Endothelial cell of umbilical vein (primary cell): ENCODE measurements at regions of chr12 and their contacts with region 1.

Region 1: DNA sequence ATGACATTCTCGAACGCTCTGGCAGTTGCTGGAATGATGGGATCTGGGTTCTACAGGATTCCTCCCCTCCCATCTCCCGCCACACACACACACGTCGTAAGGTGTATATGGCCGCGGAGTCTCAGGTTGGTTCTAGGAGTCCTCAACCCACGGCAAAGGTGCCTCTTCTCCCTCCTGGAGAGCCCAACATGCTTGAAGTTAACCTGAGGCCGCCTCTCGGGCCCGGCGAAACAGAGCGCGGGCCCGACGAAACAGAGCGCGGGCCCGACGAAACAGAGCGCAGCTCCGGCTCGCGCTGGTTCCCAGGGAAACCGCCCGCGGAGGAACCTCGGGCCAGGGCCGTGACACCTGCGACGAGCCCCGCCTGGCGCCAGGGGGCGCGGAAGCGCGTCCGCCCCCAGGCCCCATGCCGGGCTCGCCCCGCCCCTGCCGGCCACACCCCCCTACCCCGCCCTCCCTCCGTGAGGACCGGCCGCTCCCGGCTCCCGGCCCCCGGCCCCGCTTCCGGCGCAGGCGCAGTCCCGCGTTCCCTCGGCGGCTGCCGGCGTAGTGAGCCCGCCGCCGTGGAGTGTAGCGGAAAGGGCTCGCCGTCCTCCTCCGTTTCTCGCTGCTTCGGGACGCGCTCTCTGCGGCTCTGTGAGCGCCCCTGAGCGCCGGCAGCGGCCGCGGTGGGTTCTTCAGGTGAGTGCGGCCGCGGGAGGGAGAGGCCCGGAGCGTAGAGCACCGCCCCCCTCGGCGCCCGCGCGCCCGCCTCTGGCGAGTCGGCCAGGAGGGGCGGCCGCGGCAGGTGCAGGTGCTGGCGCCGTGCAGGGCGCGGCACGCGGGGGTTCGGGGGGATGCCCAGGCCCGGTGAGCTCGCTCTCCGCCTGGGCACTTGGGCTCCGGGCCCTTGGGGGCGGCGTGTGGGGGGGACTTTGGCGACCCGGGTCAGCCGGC is at the start of gene RAB3IP:
- DNase-seq: peak; percentile 76
- H3K4me3 ChIP-seq: peak within 1 kb of the TSS; percentile 46 to 61 (median 60)
- H3K27ac ChIP-seq: no peak within 1 kb of the TSS
- H3K4me1 ChIP-seq: peaks cover 7% of the 10 kb centered on the region
- H3K27me3 ChIP-seq: peaks cover 0 to 2% of the 10 kb centered on the region in 2 experiments
- CTCF ChIP-seq: peak; percentile 34 to 68
- POLR2A ChIP-seq: no peak
- total RNA-seq, gene RAB3IP: 12.1 and 13.3 TPM in 2 replicates

Region 2: GRCh38 chr12:68958322-68958721 is 780.3 kb before region 1 on chr12:
- CTCF ChIA-PET with region 1: no interaction called
- POLR2A ChIA-PET with region 1: no interaction called
- dilution Hi-C with region 1: no loop called
- intact Hi-C with region 1: no loop called
- DNase-seq: no peak
- H3K4me3 ChIP-seq: no peak overlapping the region
- H3K27ac ChIP-seq: no peak overlapping the region
- H3K4me1 ChIP-seq: no peaks in the 10 kb centered on the region
- H3K27me3 ChIP-seq: peaks cover 0 to 3% of the 10 kb centered on the region in 2 experiments
- CTCF ChIP-seq: no peak
- POLR2A ChIP-seq: no peak

Region 3: GRCh38 chr12:69359531-69360347 is 378.9 kb before region 1 on chr12 and contains the start of gene YEATS4:
- CTCF ChIA-PET with region 1: interaction called, 3 read pairs
- POLR2A ChIA-PET with region 1: no interaction called
- dilution Hi-C with region 1: no loop called
- intact Hi-C with region 1: loop called (anchors 5 kb)
- DNase-seq: peak; percentile 92
- H3K4me3 ChIP-seq: peak within 1 kb of the TSS; percentile 6 to 89 (median 65)
- H3K27ac ChIP-seq: peak within 1 kb of the TSS; percentile 69
- H3K4me1 ChIP-seq: peaks cover 7% of the 10 kb centered on the region
- H3K27me3 ChIP-seq: no peaks in the 10 kb centered on the region
- CTCF ChIP-seq: no peak
- POLR2A ChIP-seq: peak; percentile 68
- total RNA-seq, gene YEATS4: 16.5 and 16.7 TPM in 2 replicates

Region 4: DNA sequence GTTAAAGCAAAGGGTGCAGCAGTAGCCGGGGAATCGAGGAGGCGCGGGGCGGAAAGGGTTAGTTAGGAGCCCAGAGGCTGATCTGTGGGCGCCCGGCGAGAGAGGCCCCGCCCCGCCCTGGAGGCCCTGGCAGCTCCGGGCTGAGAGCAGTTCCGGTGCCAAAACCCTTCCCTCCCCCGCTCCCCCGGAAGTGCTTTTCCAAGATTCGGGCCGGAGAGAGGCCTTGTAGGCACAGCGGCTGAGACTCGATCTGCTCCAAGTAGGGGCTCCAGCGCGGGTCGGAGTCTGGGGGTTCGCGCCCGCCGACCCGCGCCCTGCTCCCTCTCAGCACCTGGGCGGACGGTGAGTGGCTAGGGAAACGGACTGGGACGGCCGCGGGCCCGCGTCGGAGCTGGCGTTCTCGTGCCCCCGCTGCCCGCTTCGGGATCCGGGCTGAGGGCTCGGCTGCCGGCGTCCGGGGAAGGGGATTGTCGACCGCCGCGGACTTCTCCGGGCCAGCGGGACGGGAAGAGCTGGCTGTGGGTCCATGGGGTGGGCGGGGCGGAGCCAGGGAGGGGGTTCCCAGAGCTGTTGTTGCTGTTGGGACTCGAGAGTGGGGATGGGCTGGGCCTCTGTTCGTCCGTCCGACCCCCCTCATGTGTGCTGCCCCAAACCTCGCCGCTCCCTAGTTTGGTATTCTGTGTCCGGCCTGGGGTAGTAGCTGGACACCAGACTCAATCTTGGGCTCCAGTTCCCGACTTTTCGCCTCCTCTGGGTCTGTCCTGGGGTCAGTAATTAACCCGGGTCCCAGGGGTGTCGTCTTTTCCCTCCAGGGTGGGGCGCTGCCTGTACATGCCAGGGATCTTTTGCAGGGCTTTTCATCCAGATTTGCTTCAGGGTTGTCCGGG is 268.2 kb before region 1 on chr12 and contains the start of gene FRS2:
- CTCF ChIA-PET with region 1: no interaction called
- POLR2A ChIA-PET with region 1: interaction called, 3 read pairs
- dilution Hi-C with region 1: no loop called
- intact Hi-C with region 1: loop called (anchors 1 kb)
- DNase-seq: peak; percentile 88
- H3K4me3 ChIP-seq: peak within 1 kb of the TSS; percentile 53 to 89 (median 79)
- H3K27ac ChIP-seq: peak within 1 kb of the TSS; percentile 59
- H3K4me1 ChIP-seq: peaks cover 12% of the 10 kb centered on the region
- H3K27me3 ChIP-seq: no peaks in the 10 kb centered on the region
- CTCF ChIP-seq: peak in 1 of 2 donors; percentile 32
- POLR2A ChIP-seq: peak; percentile 96
- total RNA-seq, gene FRS2: 15.5 and 17.1 TPM in 2 replicates

Region 5: GRCh38 chr12:69662764-69663163 is 75.9 kb before region 1 on chr12:
- CTCF ChIA-PET with region 1: interaction called, 13 read pairs
- POLR2A ChIA-PET with region 1: no interaction called
- dilution Hi-C with region 1: no loop called
- intact Hi-C with region 1: loop called (anchors 5 kb)
- DNase-seq: no peak
- H3K4me3 ChIP-seq: no peak overlapping the region
- H3K27ac ChIP-seq: no peak overlapping the region
- H3K4me1 ChIP-seq: no peaks in the 10 kb centered on the region
- H3K27me3 ChIP-seq: peaks cover 2% of the 10 kb centered on the region in 2 experiments
- CTCF ChIP-seq: no peak
- POLR2A ChIP-seq: no peak

Region 6: DNA sequence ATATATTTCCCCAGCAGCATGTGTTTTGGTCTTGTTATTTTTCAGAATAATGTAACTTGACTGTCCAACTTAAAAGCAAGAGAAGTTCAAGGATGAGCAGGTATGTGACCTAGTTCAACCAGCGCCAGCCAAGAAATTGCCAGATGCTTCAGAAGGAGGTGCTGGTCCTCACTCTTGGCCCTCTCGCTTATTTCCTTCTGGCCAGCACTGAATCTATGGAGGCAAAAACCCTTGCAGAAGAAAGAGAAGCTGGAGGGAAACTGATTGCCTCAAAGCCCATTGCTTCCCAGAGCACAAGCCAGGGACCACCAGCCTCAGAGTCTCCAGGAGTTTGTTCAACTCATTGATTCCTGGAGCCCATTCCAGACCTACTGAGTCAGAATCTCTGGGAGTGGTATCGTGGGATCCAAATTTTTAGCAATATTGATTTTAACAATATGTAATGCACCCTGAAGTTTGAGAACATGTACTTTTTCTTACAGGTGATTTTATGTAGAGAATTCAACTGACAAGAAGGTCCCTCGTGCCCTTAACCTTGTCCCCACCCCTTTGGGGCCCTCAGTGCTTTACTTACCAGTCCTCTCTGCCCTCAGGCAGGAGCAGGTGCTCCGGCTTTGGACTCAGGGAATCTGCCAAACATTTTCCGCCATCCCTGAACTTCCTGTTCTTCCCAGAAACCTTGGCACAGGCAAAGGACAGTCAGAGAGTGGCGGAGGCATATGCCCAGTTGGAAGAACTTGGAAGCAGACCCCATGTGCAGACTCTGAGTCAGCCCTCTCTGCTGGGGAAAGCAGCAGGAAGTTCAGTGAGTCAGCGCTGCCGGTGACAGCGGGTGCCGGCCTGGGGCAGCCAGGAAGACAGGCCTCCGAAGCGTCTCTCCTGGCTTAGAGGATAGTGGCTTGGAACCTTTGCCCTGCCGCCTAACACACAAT is 49.9 kb before region 1 on chr12:
- CTCF ChIA-PET with region 1: interaction called, 4 read pairs
- POLR2A ChIA-PET with region 1: no interaction called
- dilution Hi-C with region 1: no loop called
- intact Hi-C with region 1: loop called (anchors 1 kb)
- DNase-seq: peak; percentile 96
- H3K4me3 ChIP-seq: no peak overlapping the region
- H3K27ac ChIP-seq: peak overlapping the region; percentile 81
- H3K4me1 ChIP-seq: peaks cover 28% of the 10 kb centered on the region
- H3K27me3 ChIP-seq: no peaks in the 10 kb centered on the region
- CTCF ChIP-seq: no peak
- POLR2A ChIP-seq: peak; percentile 32

Region 7: DNA sequence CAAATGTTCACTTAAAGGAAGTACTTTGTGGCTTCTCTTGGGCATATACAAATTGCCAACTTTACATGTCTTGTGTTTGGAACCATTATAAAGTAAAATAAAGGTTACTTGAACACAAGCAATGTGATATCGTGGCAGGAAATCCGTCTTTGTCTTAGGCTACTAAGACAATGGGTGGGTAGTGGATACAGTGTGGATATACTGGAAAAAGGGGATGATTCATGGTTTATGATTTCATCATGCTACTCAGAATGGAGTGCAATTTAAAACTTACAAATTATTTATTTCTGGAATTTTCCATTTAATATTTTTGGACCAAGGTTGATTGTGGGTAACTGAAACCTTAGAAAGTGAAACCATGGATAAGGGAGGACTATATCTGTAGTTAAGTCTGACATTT is 134.8 kb after region 1 on chr12:
- CTCF ChIA-PET with region 1: interaction called, 3 read pairs
- POLR2A ChIA-PET with region 1: no interaction called
- dilution Hi-C with region 1: no loop called
- intact Hi-C with region 1: loop called (anchors 2 kb)
- DNase-seq: peak; percentile 87
- H3K4me3 ChIP-seq: no peak overlapping the region
- H3K27ac ChIP-seq: peak overlapping the region; percentile 68
- H3K4me1 ChIP-seq: peaks cover 14% of the 10 kb centered on the region
- H3K27me3 ChIP-seq: no peaks in the 10 kb centered on the region
- CTCF ChIP-seq: no peak
- POLR2A ChIP-seq: no peak